Activated T-helper 2 cell treated with anti-CD3 and anti-CD28 coated beads, Interferon-gamma antibody, Interleukin-2, Interleukin-4, amounts not matched to agents 10 μg/mL and 5 μg/mL and 100 μg/mL, durations not matched to agents 14 hours and 24 hours and 36 hours (primary cell): ENCODE measurements at regions of chr1 and their contacts with region 1.

Region 1: GRCh38 chr1:107142140-107142542 is 1.3 kb downstream of the NTNG1 start:
- DNase-seq: no peak
- H3K4me3 Mint-ChIP-seq: peak overlapping the region; percentile 42
- H3K27ac Mint-ChIP-seq: no peak overlapping the region
- H3K4me1 Mint-ChIP-seq: peaks cover 17% of the 10 kb centered on the region
- H3K27me3 Mint-ChIP-seq: peaks cover 49% of the 10 kb centered on the region

Region 2: DNA sequence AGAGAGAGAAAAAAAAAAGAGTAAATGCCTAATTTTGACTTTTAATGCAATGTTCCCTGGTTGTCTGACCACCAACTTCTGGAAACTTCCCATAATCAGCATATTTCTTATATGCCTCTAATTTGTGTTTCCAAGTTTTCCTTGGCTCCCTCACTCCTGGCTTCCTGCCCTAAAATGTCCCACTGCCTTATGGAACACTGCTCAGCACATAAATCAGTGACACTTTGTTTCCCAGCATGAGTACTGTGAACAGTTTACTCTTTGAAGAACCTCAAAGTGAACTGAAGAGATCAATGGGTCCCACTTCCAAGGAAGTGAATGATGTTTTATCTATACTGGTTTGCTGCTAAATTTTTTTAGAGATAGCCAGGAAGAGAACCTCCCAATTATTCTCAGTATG is 357.0 kb before region 1 on chr1:
- intact Hi-C with region 1: no loop called
- DNase-seq: no peak
- H3K4me3 Mint-ChIP-seq: no peak overlapping the region
- H3K27ac Mint-ChIP-seq: no peak overlapping the region
- H3K4me1 Mint-ChIP-seq: no peaks in the 10 kb centered on the region
- H3K27me3 Mint-ChIP-seq: no peaks in the 10 kb centered on the region

Region 3: GRCh38 chr1:107056426-107057196 is 85.5 kb before region 1 on chr1 and contains the start of gene PRMT6:
- intact Hi-C with region 1: loop called (anchors 5 kb)
- DNase-seq: peak; percentile 79
- H3K4me3 Mint-ChIP-seq: peak within 1 kb of the TSS; percentile 99
- H3K27ac Mint-ChIP-seq: peak within 1 kb of the TSS; percentile 98
- H3K4me1 Mint-ChIP-seq: peaks cover 19% of the 10 kb centered on the region
- H3K27me3 Mint-ChIP-seq: peaks cover 1% of the 10 kb centered on the region
- total RNA-seq, gene PRMT6: 20.4 and 21.0 TPM in 2 replicates

Region 4: DNA sequence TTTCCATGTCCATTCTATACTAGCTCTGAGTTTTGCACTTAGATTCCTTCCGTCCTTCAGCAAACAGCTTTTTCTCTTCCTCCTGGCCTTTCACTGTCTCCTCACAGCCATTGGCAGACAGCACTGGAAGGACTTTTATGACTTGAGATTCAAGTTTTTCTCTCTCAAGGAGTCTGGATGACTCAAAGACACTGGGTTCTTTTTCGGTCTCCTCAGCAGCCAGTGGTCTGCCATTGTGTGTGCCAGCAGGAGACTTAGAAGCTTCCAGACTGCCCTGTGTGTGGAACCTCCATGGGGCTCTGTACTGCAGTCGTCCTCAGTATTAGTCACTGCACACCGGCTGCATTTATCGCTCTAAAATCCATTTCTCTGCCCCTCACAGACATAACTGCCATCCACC is 29.2 kb after region 1 on chr1:
- intact Hi-C with region 1: no loop called
- DNase-seq: no peak
- H3K4me3 Mint-ChIP-seq: no peak overlapping the region
- H3K27ac Mint-ChIP-seq: no peak overlapping the region
- H3K4me1 Mint-ChIP-seq: no peaks in the 10 kb centered on the region
- H3K27me3 Mint-ChIP-seq: no peaks in the 10 kb centered on the region